GM10248 (cell line): ENCODE measurements at regions of chr2 and their contacts with region 1.

Region 1: GRCh38 chr2:102792568-102793208 is 30.9 kb downstream of the TMEM182 start:
- DNase-seq: no peak
- CTCF ChIP-seq: no peak

Region 2: DNA sequence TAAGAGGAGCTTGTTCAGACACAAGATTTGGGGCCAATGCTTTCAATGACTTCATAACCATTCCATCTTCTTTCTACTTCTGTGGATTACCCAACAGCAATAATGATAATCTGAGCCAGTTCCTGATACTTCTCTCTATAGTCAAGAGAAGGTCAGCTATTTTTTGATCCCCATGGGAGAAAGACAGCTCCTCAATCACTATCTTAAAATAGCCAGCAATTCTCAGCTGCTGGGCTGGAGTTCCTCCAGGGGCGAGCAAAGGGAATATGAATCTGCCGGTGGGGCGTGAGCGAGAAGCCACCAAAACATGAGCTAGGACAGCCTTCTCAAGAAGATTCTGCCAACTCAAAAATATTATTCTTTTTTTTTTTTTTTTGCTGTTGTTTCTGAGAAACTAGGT is 30.9 kb before region 1 on chr2 and contains the start of gene TMEM182:
- CTCF ChIA-PET with region 1: no interaction called
- POLR2A ChIA-PET with region 1: no interaction called
- DNase-seq: no peak
- CTCF ChIP-seq: no peak

Region 3: DNA sequence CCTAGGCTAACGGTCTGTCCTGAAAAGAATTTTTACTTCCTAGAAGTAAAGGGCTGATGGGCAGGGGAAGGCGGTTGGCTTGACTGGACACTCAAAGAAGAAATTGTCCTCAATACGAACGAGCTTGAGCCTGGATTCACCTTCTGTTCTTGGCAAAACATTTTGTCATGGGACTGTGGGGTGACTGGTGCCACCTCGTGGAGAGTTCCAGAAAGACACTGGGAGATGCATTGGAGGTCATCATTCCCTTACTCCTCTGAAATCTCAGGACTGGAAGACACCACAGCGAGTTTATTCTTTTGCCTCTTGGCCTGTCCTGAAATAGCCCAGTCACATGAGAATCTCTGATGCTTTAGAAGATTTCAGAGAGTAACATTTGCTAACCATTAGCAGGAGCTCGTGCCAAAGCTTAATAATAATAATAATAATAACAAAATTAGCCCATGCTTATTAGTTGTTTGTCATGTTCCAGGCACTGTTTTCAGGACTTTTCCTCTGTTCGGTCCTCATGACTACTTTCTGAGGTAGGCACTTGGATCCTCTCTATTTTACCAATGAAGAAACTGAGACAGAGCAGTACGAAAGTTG is 13.7 kb after region 1 on chr2:
- CTCF ChIA-PET with region 1: interaction called, 17 read pairs
- POLR2A ChIA-PET with region 1: no interaction called
- DNase-seq: peak; percentile 73
- CTCF ChIP-seq: peak; percentile 76